Activated B cell treated with CpG ODN at 0.5 μM for 24 hours (primary cell): ENCODE measurements at regions of chr19 and their contacts with region 1.

Region 1: GRCh38 chr19:55599468-55600279 is at the start of gene FIZ1:
- DNase-seq: peak; percentile 92
- ATAC-seq: peak; percentile 69
- H3K4me3 Mint-ChIP-seq: peak within 1 kb of the TSS; percentile 99
- H3K27ac Mint-ChIP-seq: peak within 1 kb of the TSS; percentile 99
- H3K4me1 Mint-ChIP-seq: peaks cover 19% of the 10 kb centered on the region
- H3K27me3 Mint-ChIP-seq: no peaks in the 10 kb centered on the region
- CTCF ChIP-seq: no peak
- total RNA-seq, gene FIZ1: 17.5 and 21.2 TPM in 2 replicates

Region 2: DNA sequence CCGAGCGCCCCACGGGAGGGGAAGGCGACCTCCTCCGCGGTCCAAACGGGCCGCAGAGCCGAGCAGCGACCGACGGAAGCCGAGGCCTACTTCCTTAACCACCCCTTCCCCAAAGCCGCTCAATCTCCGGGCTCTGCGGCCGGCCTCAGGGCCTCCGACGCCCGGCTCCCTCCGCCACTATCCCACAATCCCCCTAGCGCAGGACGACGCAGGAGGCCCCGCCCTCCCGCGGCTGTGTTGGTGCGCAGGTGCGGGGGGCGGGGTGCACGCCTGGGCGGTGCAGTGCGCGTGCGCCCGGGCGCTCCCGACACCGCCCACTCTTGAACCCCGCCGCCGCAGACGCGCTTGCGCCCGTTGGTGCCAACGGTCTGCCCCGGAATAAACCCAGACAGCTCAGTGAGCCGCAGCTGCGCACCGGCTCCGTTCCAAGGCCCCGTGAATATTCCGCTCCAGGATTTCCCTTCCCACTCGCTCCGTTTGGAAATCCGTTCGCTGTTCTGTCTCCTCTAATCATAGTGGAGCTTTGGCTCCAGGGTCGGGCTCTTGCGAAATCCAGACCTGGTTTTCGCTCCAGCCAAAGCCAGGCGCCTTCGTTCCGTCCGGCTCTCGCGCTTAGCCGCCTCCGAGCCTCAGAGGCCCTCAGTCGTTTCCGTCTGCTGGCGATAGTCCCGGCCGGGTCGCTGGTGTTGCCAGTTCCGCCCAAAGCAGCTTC is 340.7 kb before region 1 on chr19 and contains the start of gene PPP6R1:
- CTCF ChIA-PET with region 1: interaction called, 3 read pairs
- POLR2A ChIA-PET with region 1: interaction called, 19 read pairs
- intact Hi-C with region 1: loop called (anchors 10 kb)
- DNase-seq: peak; percentile 94
- ATAC-seq: peak; percentile 75
- H3K4me3 Mint-ChIP-seq: peak within 1 kb of the TSS; percentile 98
- H3K27ac Mint-ChIP-seq: peak within 1 kb of the TSS; percentile 100
- H3K4me1 Mint-ChIP-seq: peaks cover 52% of the 10 kb centered on the region
- H3K27me3 Mint-ChIP-seq: no peaks in the 10 kb centered on the region
- CTCF ChIP-seq: no peak
- total RNA-seq, gene PPP6R1: 203 and 220 TPM in 2 replicates

Region 3: DNA sequence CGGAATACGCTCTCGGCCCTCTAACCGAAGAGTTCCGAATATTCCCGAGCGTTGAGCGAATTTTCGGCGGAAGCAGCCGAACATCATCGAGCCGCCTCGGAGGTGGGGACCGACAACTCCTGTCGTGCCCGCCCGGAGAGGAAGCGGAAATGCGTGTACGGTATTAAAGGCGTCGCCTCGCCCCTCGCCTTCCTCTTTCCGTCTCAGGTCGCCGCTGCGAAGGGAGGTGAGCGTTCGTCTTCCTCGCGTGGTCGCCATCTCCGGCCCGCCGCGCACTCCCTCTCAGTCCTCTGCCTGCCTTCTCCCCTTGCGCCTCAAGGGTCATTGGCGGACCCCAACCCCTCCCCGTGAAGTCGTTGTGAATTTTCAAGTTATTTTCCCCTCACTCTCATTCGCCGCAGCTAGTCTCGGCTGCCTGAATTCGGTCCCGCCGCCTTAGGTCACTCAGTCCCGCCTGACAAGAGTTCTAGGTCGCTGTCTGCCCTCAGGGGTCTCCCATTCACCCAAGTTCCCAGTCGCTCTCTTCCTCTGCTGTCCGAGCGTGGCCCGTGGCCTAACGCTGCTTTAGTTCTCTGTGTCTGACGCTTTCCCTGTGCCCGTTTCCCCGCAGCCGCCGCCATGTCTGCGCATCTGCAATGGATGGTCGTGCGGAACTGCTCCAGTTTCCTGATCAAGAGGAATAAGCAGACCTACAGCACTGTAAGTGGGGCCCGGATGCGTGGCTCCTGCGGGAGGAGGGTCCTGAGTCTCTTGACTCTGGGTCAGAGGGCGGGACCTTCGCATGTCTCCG is 213.7 kb before region 1 on chr19 and contains the start of gene RPL28:
- CTCF ChIA-PET with region 1: no interaction called
- POLR2A ChIA-PET with region 1: interaction called, 6 read pairs
- intact Hi-C with region 1: loop called (anchors 1 kb)
- DNase-seq: peak; percentile 95
- ATAC-seq: peak; percentile 79
- H3K4me3 Mint-ChIP-seq: peak within 1 kb of the TSS; percentile 100
- H3K27ac Mint-ChIP-seq: peak within 1 kb of the TSS; percentile 99
- H3K4me1 Mint-ChIP-seq: peaks cover 67% of the 10 kb centered on the region
- H3K27me3 Mint-ChIP-seq: no peaks in the 10 kb centered on the region
- CTCF ChIP-seq: no peak
- total RNA-seq, gene RPL28: 3,790 and 4,042 TPM in 2 replicates

Region 4: DNA sequence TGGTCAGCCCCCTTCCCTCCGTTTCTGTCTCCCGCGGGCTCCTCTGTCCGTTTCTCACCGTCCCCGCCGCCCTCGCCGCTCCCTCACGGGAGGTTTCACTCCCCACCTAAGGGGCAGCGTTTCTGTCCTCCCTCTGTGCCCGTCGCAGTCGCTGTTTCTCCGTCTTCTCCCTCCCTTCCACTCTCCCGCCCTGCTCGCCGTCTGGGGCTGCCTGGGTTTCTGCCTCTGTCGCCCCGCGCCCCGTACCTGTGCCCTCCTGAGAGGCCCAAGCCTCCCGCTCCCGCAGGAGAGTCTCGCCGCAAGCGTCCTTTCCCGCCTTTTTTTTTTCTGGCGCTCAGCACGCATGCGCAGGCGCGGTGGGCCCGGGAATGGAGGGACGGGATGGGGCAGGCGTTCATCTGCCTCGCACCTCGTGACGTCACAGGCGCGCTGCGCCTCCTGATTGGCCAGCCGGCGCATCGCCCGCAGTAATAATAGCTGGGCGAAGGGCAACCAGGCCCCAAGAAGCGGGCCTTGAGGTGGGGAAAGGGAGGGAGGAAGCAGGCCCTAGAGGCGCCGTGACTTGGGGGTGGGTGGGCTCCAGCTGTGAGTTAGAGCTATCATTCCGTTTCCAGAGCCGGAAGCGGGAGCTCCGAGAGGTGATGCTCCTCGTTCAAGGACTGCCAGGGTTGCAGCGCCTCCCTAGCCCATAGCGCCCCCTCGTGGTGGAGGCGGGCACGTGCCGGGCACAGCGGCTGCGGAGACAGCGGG is 96.0 kb before region 1 on chr19:
- CTCF ChIA-PET with region 1: interaction called, 3 read pairs
- POLR2A ChIA-PET with region 1: interaction called, 11 read pairs
- intact Hi-C with region 1: no loop called
- DNase-seq: peak; percentile 97
- ATAC-seq: peak; percentile 95
- H3K4me3 Mint-ChIP-seq: peak overlapping the region; percentile 88
- H3K27ac Mint-ChIP-seq: peak overlapping the region; percentile 91
- H3K4me1 Mint-ChIP-seq: peaks cover 11% of the 10 kb centered on the region
- H3K27me3 Mint-ChIP-seq: peaks cover 3% of the 10 kb centered on the region
- CTCF ChIP-seq: peak; percentile 79

Region 5: GRCh38 chr19:55563261-55563690 is 36.4 kb before region 1 on chr19:
- CTCF ChIA-PET with region 1: no interaction called
- POLR2A ChIA-PET with region 1: no interaction called
- intact Hi-C with region 1: no loop called
- DNase-seq: no peak
- ATAC-seq: no peak
- H3K4me3 Mint-ChIP-seq: no peak overlapping the region
- H3K27ac Mint-ChIP-seq: no peak overlapping the region
- H3K4me1 Mint-ChIP-seq: no peaks in the 10 kb centered on the region
- H3K27me3 Mint-ChIP-seq: peaks cover 13% of the 10 kb centered on the region
- CTCF ChIP-seq: no peak

Region 6: DNA sequence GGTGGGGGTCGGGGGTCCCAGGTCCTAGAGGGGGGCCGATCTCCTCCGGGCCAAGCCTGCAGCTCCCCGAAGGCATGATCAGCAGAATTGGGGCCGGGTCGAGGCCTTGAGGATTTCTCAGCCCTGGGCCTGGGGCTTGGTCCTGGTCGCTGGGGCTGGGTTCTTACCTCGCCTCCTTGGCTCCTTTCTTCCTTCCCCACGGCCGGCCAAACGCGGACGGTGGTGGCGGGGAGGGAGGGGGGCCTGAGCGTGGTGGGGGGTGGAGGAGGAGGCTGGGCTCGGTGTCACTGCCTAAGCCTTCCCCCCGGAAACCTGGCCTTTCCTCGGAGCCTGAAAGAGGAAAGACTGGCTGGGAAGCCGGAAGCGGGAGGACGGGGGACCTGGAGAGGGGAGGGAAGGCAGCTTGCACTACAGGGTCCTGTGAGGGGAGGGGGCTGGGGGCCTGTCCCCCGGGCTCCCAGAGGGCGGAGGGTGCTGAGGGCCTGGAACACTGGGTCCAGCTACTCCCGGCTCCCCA is 19.0 kb before region 1 on chr19 and contains the start of gene ZNF579:
- CTCF ChIA-PET with region 1: no interaction called
- POLR2A ChIA-PET with region 1: interaction called, 42 read pairs
- intact Hi-C with region 1: loop called (anchors 2 kb)
- DNase-seq: peak; percentile 68
- ATAC-seq: peak; percentile 83
- H3K4me3 Mint-ChIP-seq: peak within 1 kb of the TSS; percentile 84
- H3K27ac Mint-ChIP-seq: peak within 1 kb of the TSS; percentile 75
- H3K4me1 Mint-ChIP-seq: peaks cover 29% of the 10 kb centered on the region
- H3K27me3 Mint-ChIP-seq: no peaks in the 10 kb centered on the region
- CTCF ChIP-seq: no peak
- total RNA-seq, gene ZNF579: 10.3 and 10.9 TPM in 2 replicates

Region 7: GRCh38 chr19:55624109-55625003 is 24.7 kb after region 1 on chr19 and contains the start of gene ZNF784:
- CTCF ChIA-PET with region 1: no interaction called
- POLR2A ChIA-PET with region 1: interaction called, 53 read pairs
- intact Hi-C with region 1: loop called (anchors 1 kb)
- DNase-seq: peak; percentile 93
- ATAC-seq: peak; percentile 85
- H3K4me3 Mint-ChIP-seq: peak within 1 kb of the TSS; percentile 94
- H3K27ac Mint-ChIP-seq: peak within 1 kb of the TSS; percentile 97
- H3K4me1 Mint-ChIP-seq: peaks cover 17% of the 10 kb centered on the region
- H3K27me3 Mint-ChIP-seq: no peaks in the 10 kb centered on the region
- CTCF ChIP-seq: no peak
- total RNA-seq, gene ZNF784: 8.7 and 8.9 TPM in 2 replicates

Region 8: DNA sequence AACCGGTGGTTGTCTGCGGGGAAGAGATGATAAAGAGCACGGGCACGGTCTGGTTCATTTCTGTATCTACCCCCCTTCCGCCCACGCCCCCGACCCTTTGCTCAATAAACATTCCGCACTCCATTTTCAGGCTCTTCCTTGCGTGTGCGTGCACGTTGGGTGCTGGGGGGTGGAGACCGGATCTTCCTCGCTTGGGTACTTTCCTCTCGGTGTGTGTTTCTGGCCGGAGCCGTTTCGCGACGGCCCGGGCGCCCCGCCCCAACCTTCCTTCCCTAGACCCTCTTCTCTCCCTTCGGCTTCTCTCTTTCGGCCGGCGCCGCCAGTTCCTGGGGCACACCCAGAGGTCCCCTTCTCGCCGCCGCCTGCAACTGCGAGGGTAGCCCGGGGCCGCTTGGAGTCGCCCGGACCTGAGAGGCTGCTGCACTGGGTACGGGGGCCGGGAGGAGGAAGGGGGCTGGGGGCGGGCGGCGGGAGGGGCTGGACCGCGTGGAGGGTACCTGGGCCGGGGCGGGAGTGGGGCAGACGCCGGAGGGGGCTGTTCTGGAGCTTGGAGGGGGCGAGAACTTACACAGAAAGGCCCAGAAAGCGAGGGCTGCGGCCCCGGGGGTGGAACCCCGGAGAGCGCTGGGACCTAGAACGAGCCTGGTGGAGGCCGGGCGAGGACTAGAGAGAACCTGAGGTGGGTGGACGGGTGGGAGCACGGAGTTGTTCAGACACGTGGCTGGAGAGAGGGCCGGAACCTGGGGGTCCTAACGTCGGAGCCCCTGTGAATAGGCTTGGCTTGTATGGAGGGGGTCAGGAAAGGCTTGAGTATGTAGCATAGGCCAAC is 43.9 kb after region 1 on chr19 and contains the start of gene ZNF581:
- CTCF ChIA-PET with region 1: interaction called, 3 read pairs
- POLR2A ChIA-PET with region 1: interaction called, 36 read pairs
- intact Hi-C with region 1: no loop called
- DNase-seq: peak; percentile 84
- ATAC-seq: peak; percentile 51
- H3K4me3 Mint-ChIP-seq: peak within 1 kb of the TSS; percentile 86
- H3K27ac Mint-ChIP-seq: peak within 1 kb of the TSS; percentile 96
- H3K4me1 Mint-ChIP-seq: peaks cover 66% of the 10 kb centered on the region
- H3K27me3 Mint-ChIP-seq: no peaks in the 10 kb centered on the region
- CTCF ChIP-seq: no peak
- total RNA-seq, gene ZNF581: 42.7 and 46.5 TPM in 2 replicates

Region 9: GRCh38 chr19:56140583-56141416 is 541.1 kb after region 1 on chr19 and contains the start of gene ZNF444:
- CTCF ChIA-PET with region 1: no interaction called
- POLR2A ChIA-PET with region 1: no interaction called
- intact Hi-C with region 1: no loop called
- DNase-seq: peak; percentile 96
- ATAC-seq: peak; percentile 86
- H3K4me3 Mint-ChIP-seq: peak within 1 kb of the TSS; percentile 98
- H3K27ac Mint-ChIP-seq: peak within 1 kb of the TSS; percentile 99
- H3K4me1 Mint-ChIP-seq: peaks cover 29% of the 10 kb centered on the region
- H3K27me3 Mint-ChIP-seq: no peaks in the 10 kb centered on the region
- CTCF ChIP-seq: no peak
- total RNA-seq, gene ZNF444: 28.1 and 32.1 TPM in 2 replicates